ENCODE measurements at regions of chr16 and their contacts with region 1.

Region 1: GRCh38 chr16:13957197-13958078 is 37.5 kb downstream of the ERCC4 start:
- DNase-seq: peak; percentile 77
- ATAC-seq: peak; percentile 95
- H3K4me3 ChIP-seq: peak overlapping the region; percentile 33 to 63
- H3K27ac ChIP-seq: peak overlapping the region; percentile 95
- H3K4me1 ChIP-seq: peaks cover 41% of the 10 kb centered on the region
- H3K27me3 ChIP-seq: no peaks in the 10 kb centered on the region
- CTCF ChIP-seq: no peak

Region 2: GRCh38 chr16:12934930-12935575 is 1022.4 kb before region 1 on chr16:
- CTCF ChIA-PET with region 1: no interaction called
- POLR2A ChIA-PET with region 1: no interaction called
- in situ Hi-C with region 1: no loop called
- intact Hi-C with region 1: no loop called
- DNase-seq: no peak
- ATAC-seq: no peak
- H3K4me3 ChIP-seq: no peak overlapping the region
- H3K27ac ChIP-seq: no peak overlapping the region
- H3K4me1 ChIP-seq: no peaks in the 10 kb centered on the region
- H3K27me3 ChIP-seq: no peaks in the 10 kb centered on the region
- CTCF ChIP-seq: no peak

Region 3: GRCh38 chr16:13913374-13914292 is 43.8 kb before region 1 on chr16:
- CTCF ChIA-PET with region 1: no interaction called
- POLR2A ChIA-PET with region 1: no interaction called
- in situ Hi-C with region 1: no loop called
- intact Hi-C with region 1: no loop called
- DNase-seq: no peak
- ATAC-seq: no peak
- H3K4me3 ChIP-seq: no peak overlapping the region
- H3K27ac ChIP-seq: no peak overlapping the region
- H3K4me1 ChIP-seq: no peaks in the 10 kb centered on the region
- H3K27me3 ChIP-seq: peaks cover 10% of the 10 kb centered on the region; the same call in 1 of the 2 replicates
- CTCF ChIP-seq: no peak

Region 4: GRCh38 chr16:13935408-13935807 is 22.0 kb before region 1 on chr16:
- CTCF ChIA-PET with region 1: no interaction called
- POLR2A ChIA-PET with region 1: no interaction called
- in situ Hi-C with region 1: no loop called
- intact Hi-C with region 1: no loop called
- DNase-seq: no peak
- ATAC-seq: no peak
- H3K4me3 ChIP-seq: no peak overlapping the region
- H3K27ac ChIP-seq: no peak overlapping the region
- H3K4me1 ChIP-seq: no peaks in the 10 kb centered on the region
- H3K27me3 ChIP-seq: no peaks in the 10 kb centered on the region
- CTCF ChIP-seq: peak; percentile 69

Region 5: DNA sequence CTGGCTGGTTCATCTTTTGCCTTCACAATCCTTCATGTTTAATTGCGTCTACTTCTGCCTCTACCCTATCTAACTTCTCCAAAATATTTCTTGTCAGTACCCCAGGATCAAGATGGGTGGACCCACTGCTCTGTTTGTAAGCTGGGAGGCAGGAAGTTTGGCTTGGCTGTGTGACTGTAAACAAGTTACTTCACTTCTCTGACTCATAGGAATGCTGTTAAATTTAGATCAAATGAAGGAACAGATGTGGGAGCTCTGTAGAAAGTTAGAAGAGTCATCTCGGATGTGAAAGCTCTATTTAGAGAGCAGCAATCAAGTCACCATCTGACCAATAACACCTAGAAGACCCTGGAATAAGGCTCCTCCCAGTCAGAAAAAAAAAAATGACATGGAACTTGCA is 58.5 kb after region 1 on chr16:
- CTCF ChIA-PET with region 1: no interaction called
- POLR2A ChIA-PET with region 1: no interaction called
- in situ Hi-C with region 1: no loop called
- intact Hi-C with region 1: loop called (anchors 5 kb)
- DNase-seq: peak; percentile 67
- ATAC-seq: peak; percentile 74
- H3K4me3 ChIP-seq: no peak overlapping the region
- H3K27ac ChIP-seq: peak overlapping the region; percentile 62
- H3K4me1 ChIP-seq: peaks cover 27% of the 10 kb centered on the region
- H3K27me3 ChIP-seq: no peaks in the 10 kb centered on the region
- CTCF ChIP-seq: no peak

Region 6: DNA sequence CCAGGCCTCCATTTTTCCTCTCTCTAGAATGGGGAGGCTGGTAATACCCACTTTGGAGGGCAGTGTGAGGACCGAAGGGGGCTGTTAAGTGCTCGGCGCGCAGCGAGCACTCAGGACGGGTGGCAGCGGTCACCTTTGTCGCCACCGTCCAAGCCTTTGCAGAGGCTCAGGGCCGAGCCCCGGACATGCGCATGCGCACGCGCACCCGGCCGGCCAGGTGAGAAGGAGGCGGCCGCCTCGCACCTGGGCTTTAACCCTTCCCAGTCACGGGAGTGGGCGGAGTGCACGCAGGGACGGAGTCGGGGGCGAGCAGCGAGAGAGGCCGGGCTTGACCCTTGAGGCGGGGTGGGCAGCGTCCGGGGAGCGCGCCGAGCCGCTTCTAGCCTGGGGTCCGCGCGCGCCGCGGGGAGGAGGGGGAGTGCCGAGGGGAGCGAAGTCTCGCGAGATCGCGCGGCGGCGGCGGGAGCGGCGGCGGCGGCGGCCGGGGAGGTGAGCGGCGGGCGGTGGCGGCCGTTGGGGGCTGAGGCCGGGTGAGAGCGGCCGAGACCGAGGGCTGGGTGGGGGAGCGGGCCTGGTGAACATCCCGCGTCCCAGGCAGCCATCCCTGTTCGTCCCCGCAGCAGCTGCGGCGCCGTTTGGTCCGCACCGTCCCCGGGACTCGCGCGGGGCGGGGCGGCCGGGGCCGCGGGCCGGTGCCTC is 113.6 kb after region 1 on chr16 and contains the start of gene MRTFB:
- CTCF ChIA-PET with region 1: no interaction called
- POLR2A ChIA-PET with region 1: no interaction called
- in situ Hi-C with region 1: no loop called
- intact Hi-C with region 1: loop called (anchors 10 kb)
- DNase-seq: no peak
- ATAC-seq: peak; percentile 95
- H3K4me3 ChIP-seq: peak within 1 kb of the TSS; percentile 75 to 78
- H3K27ac ChIP-seq: peak within 1 kb of the TSS; percentile 91
- H3K4me1 ChIP-seq: peaks cover 26% of the 10 kb centered on the region
- H3K27me3 ChIP-seq: no peaks in the 10 kb centered on the region
- CTCF ChIP-seq: no peak
- total RNA-seq, gene MRTFB: 90.5 TPM

Measured in Panc1 (cell line).